ENCODE measurements at regions of chr22 and their contacts with region 1.

Region 1: DNA sequence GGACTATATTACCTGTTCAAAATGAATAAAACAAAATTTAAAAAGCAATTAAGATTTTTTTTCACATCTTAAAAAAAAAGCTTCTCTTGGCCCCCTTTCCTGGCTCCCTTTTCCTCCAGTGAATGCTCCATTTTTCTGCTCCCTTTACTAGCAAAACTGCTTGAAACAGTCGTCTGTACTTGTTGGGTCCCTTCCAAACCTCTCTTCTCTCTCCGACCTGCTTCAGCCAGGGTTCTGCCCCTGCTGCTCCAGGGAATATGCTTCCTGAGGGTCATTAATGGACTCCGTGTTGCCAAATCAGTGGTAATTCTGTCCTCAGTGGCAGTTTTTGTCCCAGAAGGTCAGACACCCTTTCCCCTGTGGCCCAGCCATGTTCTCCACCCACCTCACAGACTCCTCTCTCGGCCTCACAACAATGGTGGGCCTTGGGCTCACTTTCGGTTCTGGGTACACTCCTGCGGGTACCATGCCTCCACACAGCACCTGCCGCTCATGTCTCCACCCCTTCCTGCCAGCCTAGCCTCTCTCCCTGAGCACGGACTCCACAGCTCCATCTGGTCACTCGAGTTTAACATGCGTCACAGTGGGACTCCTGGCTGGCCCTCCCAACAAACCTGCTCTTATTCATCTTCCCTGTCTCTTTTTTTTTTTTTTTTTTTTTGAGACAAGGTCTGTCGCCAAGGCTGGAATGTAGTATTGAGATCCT is 7.8 kb upstream of the POLR3H start:
- DNase-seq: no peak
- H3K4me3 ChIP-seq: no peak overlapping the region
- H3K27ac ChIP-seq: no peak overlapping the region
- H3K4me1 ChIP-seq: no peaks in the 10 kb centered on the region
- H3K27me3 ChIP-seq: no peaks in the 10 kb centered on the region
- CTCF ChIP-seq: no peak
- POLR2A ChIP-seq: no peak

Region 2: DNA sequence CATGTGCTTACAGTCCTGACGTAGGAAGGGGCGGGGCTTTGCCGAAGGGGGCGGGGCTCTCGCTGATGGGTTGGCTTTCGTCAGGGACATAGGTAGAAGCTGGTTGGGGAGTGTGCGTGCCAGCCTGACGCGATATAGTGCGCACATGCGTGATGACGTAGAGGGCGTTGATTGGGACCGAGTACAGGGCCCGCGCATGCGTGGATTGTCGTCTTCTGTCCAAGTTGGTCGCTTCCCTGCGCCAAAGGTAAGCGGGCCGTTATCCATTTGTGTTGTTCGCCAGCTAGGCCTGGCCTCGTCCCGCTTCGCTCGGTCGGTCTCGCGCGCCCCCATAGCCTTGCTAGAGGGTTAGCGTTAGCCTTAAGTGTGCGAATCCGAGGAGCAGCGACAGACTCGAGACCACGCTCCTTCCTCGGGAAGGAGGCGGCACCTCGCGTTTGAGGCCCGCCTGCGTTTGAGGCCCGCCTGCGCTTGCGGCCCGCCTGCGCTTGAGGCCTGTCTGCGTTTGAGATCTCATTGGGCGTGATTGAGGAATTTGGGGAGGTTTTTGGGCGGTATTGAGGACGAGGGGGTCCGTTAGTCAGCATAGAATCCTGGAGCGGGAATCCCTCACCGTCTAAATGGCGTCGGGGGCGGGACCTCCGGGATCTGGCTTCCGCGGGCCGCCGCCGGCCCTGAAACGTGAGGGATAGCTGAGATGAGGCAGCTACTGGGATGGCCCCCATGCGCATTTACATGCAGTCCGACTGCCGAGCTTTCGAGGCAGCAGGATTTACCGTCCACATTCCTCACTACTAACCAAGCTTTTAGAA is 69.3 kb after region 1 on chr22 and contains the start of gene XRCC6:
- intact Hi-C with region 1: loop called (anchors 2 kb)
- DNase-seq: peak; percentile 100
- H3K4me3 ChIP-seq: peak within 1 kb of the TSS; percentile 88 to 97 (median 89)
- H3K27ac ChIP-seq: peak within 1 kb of the TSS; percentile 98 to 99
- H3K4me1 ChIP-seq: peaks cover 3 to 12% of the 10 kb centered on the region in 2 donors
- H3K27me3 ChIP-seq: no peaks in the 10 kb centered on the region
- CTCF ChIP-seq: no peak
- POLR2A ChIP-seq: peak; percentile 79
- total RNA-seq, gene XRCC6: 194 to 232 (median 220) TPM

Region 3: DNA sequence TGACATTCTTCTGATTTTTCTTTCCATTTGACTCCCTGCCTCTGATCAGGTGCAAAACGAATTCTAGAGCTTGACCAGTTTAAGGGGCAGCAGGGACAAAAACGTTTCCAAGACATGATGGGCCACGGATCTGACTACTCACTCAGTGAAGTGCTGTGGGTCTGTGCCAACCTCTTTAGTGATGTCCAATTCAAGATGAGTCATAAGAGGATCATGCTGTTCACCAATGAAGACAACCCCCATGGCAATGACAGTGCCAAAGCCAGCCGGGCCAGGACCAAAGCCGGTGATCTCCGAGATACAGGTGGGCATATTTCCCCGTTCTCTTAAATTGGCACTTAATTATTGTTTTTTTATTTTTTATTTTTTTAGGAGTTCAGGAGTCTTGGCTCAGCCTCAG is 84.4 kb after region 1 on chr22:
- intact Hi-C with region 1: no loop called
- DNase-seq: no peak
- H3K4me3 ChIP-seq: no peak overlapping the region
- H3K27ac ChIP-seq: no peak overlapping the region
- H3K4me1 ChIP-seq: no peaks in the 10 kb centered on the region
- H3K27me3 ChIP-seq: no peaks in the 10 kb centered on the region
- CTCF ChIP-seq: no peak
- POLR2A ChIP-seq: no peak

Region 4: DNA sequence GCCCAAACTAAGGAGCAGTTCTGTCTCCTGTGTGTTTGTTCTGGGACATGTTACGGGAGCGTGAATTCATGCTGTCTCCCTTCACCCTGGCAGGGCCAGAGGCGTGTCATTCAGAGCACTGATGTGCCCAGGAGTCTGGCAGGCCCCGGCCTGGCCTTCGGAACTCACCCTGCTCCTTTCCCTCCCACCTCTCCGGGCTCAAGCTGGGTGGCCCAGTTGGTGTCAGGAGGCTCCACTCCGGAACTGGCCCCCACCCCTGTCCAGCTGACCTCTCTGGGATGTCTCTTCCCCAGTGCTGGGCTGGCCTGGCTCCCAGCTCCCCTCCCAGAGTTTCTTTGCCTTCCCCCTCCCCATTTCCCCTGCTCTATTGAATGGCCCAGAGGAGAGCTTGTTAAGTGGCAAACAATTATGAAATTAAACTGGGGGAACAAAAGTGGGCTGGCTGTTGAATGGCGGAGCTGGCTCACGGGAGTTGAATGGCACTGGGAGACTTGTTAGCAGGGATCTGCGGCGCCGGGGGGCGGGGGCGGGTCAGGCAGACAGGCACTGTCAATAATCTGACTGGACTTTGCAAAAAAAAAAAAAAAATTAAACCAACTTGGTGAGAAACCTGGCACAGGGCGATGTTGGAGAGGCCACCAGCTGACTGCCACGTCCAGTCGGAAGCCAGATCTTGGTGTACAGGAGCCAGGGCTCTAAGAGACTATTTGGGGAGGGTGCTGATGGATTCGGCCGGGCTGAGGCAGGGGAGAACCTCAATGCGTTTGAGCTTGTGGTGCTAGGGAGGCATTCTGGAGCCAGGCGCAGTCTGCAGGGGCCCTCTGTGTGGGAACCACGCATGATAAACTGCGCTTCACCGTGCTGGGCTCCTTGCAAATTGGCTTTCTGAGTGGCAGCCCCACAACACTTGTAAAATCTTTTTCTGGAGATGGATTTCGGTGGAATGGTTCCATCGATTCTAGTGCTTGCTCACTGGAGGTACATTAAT is 1861.1 kb after region 1 on chr22:
- intact Hi-C with region 1: no loop called
- DNase-seq: no peak
- H3K4me3 ChIP-seq: no peak overlapping the region
- H3K27ac ChIP-seq: no peak overlapping the region
- H3K4me1 ChIP-seq: no peaks in the 10 kb centered on the region
- H3K27me3 ChIP-seq: peaks cover 0 to 45% of the 10 kb centered on the region in 2 donors
- CTCF ChIP-seq: no peak
- POLR2A ChIP-seq: no peak

Measured in breast epithelium (tissue), 4 donors.